ENCODE measurements at regions of chr9 and their contacts with region 1.

Region 1: GRCh38 chr9:4984621-4985385 is at the start of gene JAK2:
- DNase-seq: peak; percentile 87
- H3K4me3 Mint-ChIP-seq: peak within 1 kb of the TSS; percentile 92
- H3K27ac Mint-ChIP-seq: peak within 1 kb of the TSS; percentile 96
- H3K4me1 Mint-ChIP-seq: peaks cover 54% of the 10 kb centered on the region
- H3K27me3 Mint-ChIP-seq: no peaks in the 10 kb centered on the region
- total RNA-seq, gene JAK2: 30.8 and 32.0 TPM in 2 replicates

Region 2: DNA sequence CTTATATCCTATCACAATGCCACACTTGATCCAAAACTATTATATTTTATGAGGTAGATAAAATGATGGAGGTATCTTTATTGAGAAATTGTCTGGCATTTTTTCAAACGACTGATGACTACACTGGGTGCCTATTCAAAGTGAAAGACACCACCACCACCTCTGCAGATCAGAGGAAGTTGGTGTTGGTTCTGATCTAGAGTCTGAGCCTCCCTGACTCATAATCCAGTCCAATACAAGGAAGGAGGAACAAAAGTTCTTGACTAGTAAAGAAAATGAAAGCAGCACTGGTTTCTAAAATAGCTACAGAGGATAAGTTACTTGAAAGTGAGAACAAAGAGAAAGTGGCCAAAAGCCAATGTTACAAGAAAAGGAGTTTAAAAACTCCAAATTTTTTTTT is 1598.9 kb before region 1 on chr9:
- intact Hi-C with region 1: loop called (anchors 5 kb)
- DNase-seq: peak; percentile 19
- H3K4me3 Mint-ChIP-seq: no peak overlapping the region
- H3K27ac Mint-ChIP-seq: peak overlapping the region; percentile 64
- H3K4me1 Mint-ChIP-seq: peaks cover 28% of the 10 kb centered on the region
- H3K27me3 Mint-ChIP-seq: no peaks in the 10 kb centered on the region

Region 3: GRCh38 chr9:4740638-4741364 is 244.0 kb before region 1 on chr9 and contains the start of gene AK3:
- intact Hi-C with region 1: loop called (anchors 2 kb)
- DNase-seq: peak; percentile 81
- H3K4me3 Mint-ChIP-seq: peak within 1 kb of the TSS; percentile 89
- H3K27ac Mint-ChIP-seq: peak within 1 kb of the TSS; percentile 92
- H3K4me1 Mint-ChIP-seq: peaks cover 29% of the 10 kb centered on the region
- H3K27me3 Mint-ChIP-seq: no peaks in the 10 kb centered on the region
- total RNA-seq, gene AK3: 23.9 and 28.5 TPM in 2 replicates

Region 4: DNA sequence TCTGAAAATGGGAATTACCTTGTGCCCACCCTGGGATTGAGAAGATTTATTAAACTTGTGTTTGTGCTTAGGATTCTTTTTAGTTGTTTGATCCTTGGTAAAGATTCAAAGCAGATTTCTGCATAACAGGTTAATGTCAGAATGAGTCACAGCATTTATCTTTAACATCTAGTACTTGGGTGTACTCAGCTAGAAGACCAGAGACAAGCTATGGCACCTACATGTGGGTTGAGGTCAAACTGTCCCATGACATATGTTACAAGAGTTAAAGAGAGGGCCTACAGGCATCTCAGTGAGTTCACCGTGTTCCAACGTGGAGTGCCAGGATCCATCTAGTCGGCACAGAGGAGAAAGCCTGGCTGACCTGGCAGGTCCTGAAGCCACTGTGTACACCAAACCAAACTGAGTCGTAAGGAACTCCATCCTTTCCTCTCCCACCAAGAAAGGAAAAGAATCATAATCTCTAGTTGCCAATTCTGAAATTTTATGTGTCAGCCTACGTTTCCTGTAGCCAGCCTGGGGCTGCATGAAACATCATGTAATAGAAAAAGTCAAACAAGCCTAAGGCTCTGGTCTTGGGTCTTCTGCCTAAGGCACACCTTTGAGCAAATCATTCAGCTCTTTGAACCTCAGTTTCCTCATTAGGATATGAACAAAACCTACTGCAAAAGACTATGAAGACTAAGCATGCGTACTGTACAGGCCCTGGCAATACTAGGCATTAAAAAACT is 118.4 kb before region 1 on chr9:
- intact Hi-C with region 1: loop called (anchors 1 kb)
- DNase-seq: no peak
- H3K4me3 Mint-ChIP-seq: peak overlapping the region; percentile 45
- H3K27ac Mint-ChIP-seq: peak overlapping the region; percentile 90
- H3K4me1 Mint-ChIP-seq: peaks cover 36% of the 10 kb centered on the region
- H3K27me3 Mint-ChIP-seq: no peaks in the 10 kb centered on the region

Region 5: DNA sequence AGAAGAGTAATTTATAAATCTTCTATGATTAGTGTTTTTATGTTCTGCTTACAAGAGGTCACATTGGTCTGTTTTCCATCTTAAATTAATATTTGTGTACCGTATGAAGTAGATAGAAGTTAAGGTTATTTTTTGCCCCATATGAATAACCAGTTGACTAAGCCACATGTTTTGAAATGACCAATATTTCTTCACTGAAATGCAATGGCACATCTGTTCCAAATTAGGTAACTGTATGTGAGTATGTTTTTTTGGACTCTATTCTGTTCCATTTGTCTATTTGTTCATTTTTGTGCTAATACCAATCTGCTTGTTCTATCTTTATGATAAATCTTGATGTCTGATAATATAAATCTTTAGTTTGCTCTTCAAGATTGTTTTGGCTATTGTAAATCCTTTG is 18.0 kb after region 1 on chr9:
- intact Hi-C with region 1: loop called (anchors 2 kb)
- DNase-seq: no peak
- H3K4me3 Mint-ChIP-seq: no peak overlapping the region
- H3K27ac Mint-ChIP-seq: no peak overlapping the region
- H3K4me1 Mint-ChIP-seq: peaks cover 42% of the 10 kb centered on the region
- H3K27me3 Mint-ChIP-seq: no peaks in the 10 kb centered on the region

Region 6: GRCh38 chr9:5205071-5205470 is 220.3 kb after region 1 on chr9:
- intact Hi-C with region 1: no loop called
- DNase-seq: no peak
- H3K4me3 Mint-ChIP-seq: no peak overlapping the region
- H3K27ac Mint-ChIP-seq: no peak overlapping the region
- H3K4me1 Mint-ChIP-seq: peaks cover 9% of the 10 kb centered on the region
- H3K27me3 Mint-ChIP-seq: peaks cover 4% of the 10 kb centered on the region

Region 7: GRCh38 chr9:5336688-5337087 is 351.9 kb after region 1 on chr9:
- intact Hi-C with region 1: no loop called
- DNase-seq: peak; percentile 23
- H3K4me3 Mint-ChIP-seq: no peak overlapping the region
- H3K27ac Mint-ChIP-seq: no peak overlapping the region
- H3K4me1 Mint-ChIP-seq: peaks cover 36% of the 10 kb centered on the region
- H3K27me3 Mint-ChIP-seq: no peaks in the 10 kb centered on the region

Region 8: GRCh38 chr9:5586391-5586802 is 601.6 kb after region 1 on chr9:
- intact Hi-C with region 1: loop called (anchors 5 kb)
- DNase-seq: peak; percentile 26
- H3K4me3 Mint-ChIP-seq: peak overlapping the region; percentile 35
- H3K27ac Mint-ChIP-seq: peak overlapping the region; percentile 95
- H3K4me1 Mint-ChIP-seq: peaks cover 64% of the 10 kb centered on the region
- H3K27me3 Mint-ChIP-seq: no peaks in the 10 kb centered on the region

Region 9: GRCh38 chr9:6008169-6008979 is 1023.6 kb after region 1 on chr9:
- intact Hi-C with region 1: loop called (anchors 5 kb)
- DNase-seq: peak; percentile 91
- H3K4me3 Mint-ChIP-seq: peak overlapping the region; percentile 73
- H3K27ac Mint-ChIP-seq: peak overlapping the region; percentile 65
- H3K4me1 Mint-ChIP-seq: peaks cover 62% of the 10 kb centered on the region
- H3K27me3 Mint-ChIP-seq: no peaks in the 10 kb centered on the region

Measured in activated T-helper 1 cell treated with anti-CD3 and anti-CD28 coated beads, Interleukin-12 subunit alpha, Interleukin-12 subunit beta, Interleukin-2, Interleukin-4 antibody, amounts not matched to agents 30 ng/mL and 10 ng/mL and 1 ng/mL, durations not matched to agents 14 hours and 24 hours and 36 hours (primary cell).